ENCODE measurements at regions of chrX and their contacts with region 1.

Region 1: GRCh38 chrX:17535229-17535628 is 160.2 kb downstream of the NHS start:
- DNase-seq: no peak
- H3K4me3 ChIP-seq: no peak overlapping the region
- H3K27ac ChIP-seq: no peak overlapping the region
- H3K4me1 ChIP-seq: no peaks in the 10 kb centered on the region
- H3K27me3 ChIP-seq: no peaks in the 10 kb centered on the region
- CTCF ChIP-seq: peak; percentile 56

Region 2: DNA sequence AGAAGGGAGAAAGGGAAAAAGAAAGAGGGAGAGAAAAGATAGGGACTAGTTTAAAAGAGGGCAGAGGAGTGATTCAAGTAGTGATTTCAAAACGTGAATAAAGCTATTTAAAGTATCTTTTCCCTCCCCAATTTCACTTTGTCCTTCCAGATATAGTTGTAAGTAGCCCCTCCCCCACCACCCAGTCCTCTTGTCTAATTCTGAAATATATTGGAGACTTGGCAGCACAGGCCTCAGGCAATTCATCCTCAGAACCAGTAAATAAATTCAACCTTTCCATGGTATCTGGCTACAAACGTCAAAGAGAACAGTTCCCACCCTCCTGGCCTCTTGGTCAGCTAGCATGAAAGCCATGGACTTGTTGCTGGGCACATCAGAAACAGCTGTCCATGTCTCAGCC is 32.6 kb after region 1 on chrX:
- intact Hi-C with region 1: no loop called
- DNase-seq: no peak
- H3K4me3 ChIP-seq: no peak overlapping the region
- H3K27ac ChIP-seq: no peak overlapping the region
- H3K4me1 ChIP-seq: peaks cover 14% of the 10 kb centered on the region
- H3K27me3 ChIP-seq: no peaks in the 10 kb centered on the region
- CTCF ChIP-seq: no peak

Region 3: GRCh38 chrX:17590892-17591740 is 55.9 kb after region 1 on chrX:
- intact Hi-C with region 1: loop called (anchors 5 kb)
- DNase-seq: peak; percentile 24
- H3K4me3 ChIP-seq: peak overlapping the region; percentile 33
- H3K27ac ChIP-seq: peak overlapping the region; percentile 34
- H3K4me1 ChIP-seq: peaks cover 14% of the 10 kb centered on the region
- H3K27me3 ChIP-seq: no peaks in the 10 kb centered on the region
- CTCF ChIP-seq: peak; percentile 73

Region 4: GRCh38 chrX:17613979-17614569 is 78.8 kb after region 1 on chrX:
- intact Hi-C with region 1: no loop called
- DNase-seq: no peak
- H3K4me3 ChIP-seq: no peak overlapping the region
- H3K27ac ChIP-seq: no peak overlapping the region
- H3K4me1 ChIP-seq: no peaks in the 10 kb centered on the region
- H3K27me3 ChIP-seq: no peaks in the 10 kb centered on the region
- CTCF ChIP-seq: no peak

Measured in left ventricle myocardium inferior (tissue), 1 donor.